ENCODE measurements at regions of chr5 and their contacts with region 1.

Region 1: GRCh38 chr5:87048156-87048555 is 219.5 kb upstream of the RASA1 start:
- DNase-seq: peak; percentile 31
- H3K4me3 Mint-ChIP-seq: no peak overlapping the region
- H3K27ac Mint-ChIP-seq: peak overlapping the region; percentile 90
- H3K4me1 Mint-ChIP-seq: peaks cover 36% of the 10 kb centered on the region
- H3K27me3 Mint-ChIP-seq: no peaks in the 10 kb centered on the region
- CTCF ChIP-seq: peak; percentile 19

Region 2: GRCh38 chr5:87113861-87114260 is 65.7 kb after region 1 on chr5:
- CTCF ChIA-PET with region 1: no interaction called
- intact Hi-C with region 1: loop called (anchors 2 kb)
- DNase-seq: peak; percentile 41
- H3K4me3 Mint-ChIP-seq: no peak overlapping the region
- H3K27ac Mint-ChIP-seq: peak overlapping the region; percentile 99
- H3K4me1 Mint-ChIP-seq: peaks cover 75% of the 10 kb centered on the region
- H3K27me3 Mint-ChIP-seq: no peaks in the 10 kb centered on the region
- CTCF ChIP-seq: no peak

Measured in Calu3 (cell line).